Aorta (tissue), 5 donors: ENCODE measurements at regions of chr10 and their contacts with region 1.

Region 1: GRCh38 chr10:35336084-35336831 is at the start of gene CCNY:
- DNase-seq: peak; percentile 87 to 96
- ATAC-seq: peak; percentile 93
- H3K4me3 ChIP-seq: peak within 1 kb of the TSS; percentile 97 to 100
- H3K27ac ChIP-seq: peak within 1 kb of the TSS; percentile 30 to 67
- H3K4me1 ChIP-seq: peaks cover 0 to 16% of the 10 kb centered on the region in 2 donors
- H3K27me3 ChIP-seq: no peaks in the 10 kb centered on the region
- total RNA-seq, gene CCNY: 71.9 to 95.9 TPM

Region 2: GRCh38 chr10:35126530-35127296 is 209.5 kb before region 1 on chr10 and contains the start of gene CREM:
- intact Hi-C with region 1: loop called in 1 of 2 experiments (anchors 10 kb)
- DNase-seq: peak; percentile 99 to 100
- ATAC-seq: peak; percentile 99
- H3K4me3 ChIP-seq: peak within 1 kb of the TSS; percentile 81 to 88
- H3K27ac ChIP-seq: peak within 1 kb of the TSS; percentile 94 to 100
- H3K4me1 ChIP-seq: peaks cover 0 to 4% of the 10 kb centered on the region in 2 donors
- H3K27me3 ChIP-seq: no peaks in the 10 kb centered on the region
- total RNA-seq, gene CREM: 42.5 to 52.0 TPM

Region 3: DNA sequence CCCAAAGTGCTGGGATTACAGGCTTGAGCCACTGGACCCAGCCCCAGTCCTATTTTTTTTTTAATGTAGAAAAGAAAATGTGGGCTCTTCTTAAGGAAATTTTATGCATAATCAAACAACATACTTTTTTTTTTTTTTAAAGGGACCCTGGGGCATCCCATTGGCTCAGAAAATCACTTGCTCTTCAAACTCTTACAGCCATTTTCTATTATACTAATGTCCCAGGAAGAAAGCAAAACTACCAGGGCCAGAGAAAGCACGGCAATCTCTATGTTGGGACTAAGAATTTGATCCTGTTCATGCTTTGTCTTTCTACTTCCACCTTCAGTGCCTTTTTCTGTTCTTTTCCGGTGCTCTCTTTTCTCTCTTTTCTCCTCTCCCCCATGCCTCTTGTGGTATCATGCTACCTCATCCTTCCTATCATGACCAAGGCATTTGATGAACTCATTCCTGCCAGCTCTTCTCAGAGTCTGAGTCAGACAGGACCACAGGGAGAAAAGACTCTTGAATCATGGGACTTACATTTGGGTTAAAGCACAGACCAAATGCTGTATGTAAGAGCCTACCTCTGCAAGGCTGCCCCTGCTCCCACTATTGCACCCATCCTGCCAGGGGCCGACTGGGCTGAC is 76.4 kb before region 1 on chr10:
- intact Hi-C with region 1: no loop called
- DNase-seq: no peak
- ATAC-seq: peak; percentile 52
- H3K4me3 ChIP-seq: no peak overlapping the region
- H3K27ac ChIP-seq: no peak overlapping the region
- H3K4me1 ChIP-seq: no peaks in the 10 kb centered on the region
- H3K27me3 ChIP-seq: no peaks in the 10 kb centered on the region

Region 4: DNA sequence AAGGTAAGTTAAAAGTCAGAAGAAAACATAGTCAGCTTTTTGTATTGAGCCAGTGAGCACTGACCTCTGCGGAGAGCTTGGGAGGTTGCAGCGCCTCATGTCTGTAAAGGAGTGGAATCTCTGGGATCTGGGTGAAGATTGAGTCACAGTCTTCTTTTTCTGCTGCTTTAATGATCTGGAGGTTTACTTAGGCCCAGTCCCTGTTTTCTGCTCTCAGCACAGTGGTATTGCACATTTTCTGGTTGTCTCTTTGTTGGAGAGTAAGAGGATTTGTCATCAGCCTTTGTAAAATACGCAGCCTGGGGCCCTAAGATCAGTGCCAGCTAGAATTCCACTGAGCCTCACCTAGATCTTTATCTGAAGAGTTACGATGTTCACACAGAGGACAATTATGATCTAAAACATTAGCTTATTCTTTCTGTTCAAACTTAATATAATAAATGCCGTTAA is 210.6 kb after region 1 on chr10:
- intact Hi-C with region 1: loop called (anchors 10 kb)
- DNase-seq: no peak
- ATAC-seq: no peak
- H3K4me3 ChIP-seq: no peak overlapping the region
- H3K27ac ChIP-seq: no peak overlapping the region
- H3K4me1 ChIP-seq: peaks cover 0 to 5% of the 10 kb centered on the region in 2 donors
- H3K27me3 ChIP-seq: no peaks in the 10 kb centered on the region

Region 5: DNA sequence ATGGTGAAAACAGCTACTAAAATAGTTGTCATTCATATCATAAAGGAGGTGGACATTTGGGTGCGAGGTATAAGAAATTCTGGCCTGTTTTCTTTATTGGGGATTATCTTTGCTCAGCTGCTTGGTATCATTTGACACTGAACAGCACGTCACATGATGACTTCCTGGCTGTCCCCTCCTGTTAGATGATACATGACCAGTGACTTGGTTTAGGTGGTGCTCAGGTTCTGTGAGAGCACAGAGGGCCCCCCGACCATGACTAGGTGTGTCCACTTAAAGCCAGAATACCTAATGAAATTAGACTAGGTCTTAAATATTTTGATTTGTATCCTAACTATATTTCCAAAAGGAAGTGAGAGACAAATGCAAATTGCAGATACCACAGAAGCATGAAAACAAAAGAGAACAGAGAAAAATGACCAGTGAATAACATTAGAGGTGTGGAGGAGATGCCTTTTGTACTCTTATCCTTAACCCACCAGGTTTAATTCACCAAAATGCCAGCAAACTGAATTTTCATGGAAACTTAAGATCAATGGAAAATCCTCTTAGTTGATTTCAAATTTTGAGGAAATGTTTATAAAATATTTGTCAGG is 218.3 kb after region 1 on chr10:
- intact Hi-C with region 1: loop called (anchors 10 kb)
- DNase-seq: no peak
- ATAC-seq: no peak
- H3K4me3 ChIP-seq: no peak overlapping the region
- H3K27ac ChIP-seq: no peak overlapping the region
- H3K4me1 ChIP-seq: no peaks in the 10 kb centered on the region
- H3K27me3 ChIP-seq: no peaks in the 10 kb centered on the region

Region 6: GRCh38 chr10:35563261-35563891 is 227.1 kb after region 1 on chr10:
- intact Hi-C with region 1: loop called (anchors 10 kb)
- DNase-seq: no peak
- ATAC-seq: peak; percentile 76
- H3K4me3 ChIP-seq: no peak overlapping the region
- H3K27ac ChIP-seq: no peak overlapping the region
- H3K4me1 ChIP-seq: no peaks in the 10 kb centered on the region
- H3K27me3 ChIP-seq: no peaks in the 10 kb centered on the region